Activated naive CD4-positive, alpha-beta T cell treated with anti-CD3 and anti-CD28 coated beads for 36 hours (primary cell): ENCODE measurements at regions of chr1 and their contacts with region 1.

Region 1: DNA sequence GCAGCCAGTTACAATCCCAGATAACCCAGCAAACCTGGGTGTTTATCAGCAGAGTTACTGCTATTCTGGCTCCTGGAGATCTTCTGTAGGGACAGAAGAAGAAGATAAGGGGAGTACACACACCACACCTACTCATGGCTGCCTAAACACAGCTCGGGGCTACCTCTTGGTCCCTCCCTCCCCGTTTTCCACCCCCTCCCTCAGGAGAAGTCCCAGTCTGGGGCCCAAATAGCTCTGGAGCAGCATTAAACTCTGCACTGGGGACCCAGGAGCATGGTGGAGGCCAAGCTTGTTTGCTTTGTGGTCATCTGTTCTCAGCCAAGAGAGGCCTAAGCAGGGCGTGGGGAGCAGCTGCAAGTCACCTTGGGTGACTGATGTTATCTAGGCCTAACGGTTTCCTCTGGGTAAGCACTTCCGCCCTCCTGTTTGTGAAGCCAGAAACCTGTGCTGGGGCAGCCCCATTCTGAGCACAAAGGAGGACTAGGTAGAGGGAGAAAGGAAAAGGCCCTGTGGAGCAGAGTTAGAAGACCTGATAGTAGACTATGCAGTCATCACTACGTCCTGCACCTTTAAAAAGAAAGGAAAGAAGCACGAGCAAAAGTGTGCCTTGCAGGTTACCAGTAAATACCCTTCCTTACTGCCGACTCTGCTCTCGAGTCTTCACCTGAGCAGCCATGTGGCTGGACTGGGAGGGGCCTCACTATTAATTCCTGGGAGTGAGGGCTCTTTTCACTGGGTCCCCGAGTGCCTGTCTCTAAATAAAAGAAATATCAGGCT is 2.0 kb upstream of the RCSD1 start:
- DNase-seq: peak; percentile 92
- H3K4me3 Mint-ChIP-seq: peak overlapping the region; percentile 81
- H3K27ac Mint-ChIP-seq: peak overlapping the region; percentile 94
- H3K4me1 Mint-ChIP-seq: peaks cover 55% of the 10 kb centered on the region
- H3K27me3 Mint-ChIP-seq: no peaks in the 10 kb centered on the region

Region 2: DNA sequence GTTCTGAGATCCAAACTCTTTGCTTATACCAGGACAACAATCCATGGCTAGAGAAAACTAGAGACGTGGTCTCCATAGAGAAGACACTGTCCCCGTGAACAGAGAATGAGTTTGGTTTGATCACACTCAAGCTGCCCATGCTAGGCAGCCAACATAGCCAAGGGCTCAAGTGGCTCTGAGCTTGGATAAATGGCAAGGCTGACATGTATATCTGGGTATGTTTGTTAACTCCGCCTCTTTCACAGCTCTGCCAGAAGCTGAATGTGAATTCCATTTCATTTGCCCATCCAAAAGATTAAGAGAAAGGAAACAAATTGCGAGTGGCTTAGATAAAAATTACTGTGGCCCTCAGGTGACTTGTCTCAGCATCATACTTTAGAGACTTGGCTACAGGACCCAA is 690.7 kb before region 1 on chr1:
- CTCF ChIA-PET with region 1: no interaction called
- intact Hi-C with region 1: no loop called
- DNase-seq: no peak
- H3K4me3 Mint-ChIP-seq: no peak overlapping the region
- H3K27ac Mint-ChIP-seq: no peak overlapping the region
- H3K4me1 Mint-ChIP-seq: no peaks in the 10 kb centered on the region
- H3K27me3 Mint-ChIP-seq: no peaks in the 10 kb centered on the region

Region 3: DNA sequence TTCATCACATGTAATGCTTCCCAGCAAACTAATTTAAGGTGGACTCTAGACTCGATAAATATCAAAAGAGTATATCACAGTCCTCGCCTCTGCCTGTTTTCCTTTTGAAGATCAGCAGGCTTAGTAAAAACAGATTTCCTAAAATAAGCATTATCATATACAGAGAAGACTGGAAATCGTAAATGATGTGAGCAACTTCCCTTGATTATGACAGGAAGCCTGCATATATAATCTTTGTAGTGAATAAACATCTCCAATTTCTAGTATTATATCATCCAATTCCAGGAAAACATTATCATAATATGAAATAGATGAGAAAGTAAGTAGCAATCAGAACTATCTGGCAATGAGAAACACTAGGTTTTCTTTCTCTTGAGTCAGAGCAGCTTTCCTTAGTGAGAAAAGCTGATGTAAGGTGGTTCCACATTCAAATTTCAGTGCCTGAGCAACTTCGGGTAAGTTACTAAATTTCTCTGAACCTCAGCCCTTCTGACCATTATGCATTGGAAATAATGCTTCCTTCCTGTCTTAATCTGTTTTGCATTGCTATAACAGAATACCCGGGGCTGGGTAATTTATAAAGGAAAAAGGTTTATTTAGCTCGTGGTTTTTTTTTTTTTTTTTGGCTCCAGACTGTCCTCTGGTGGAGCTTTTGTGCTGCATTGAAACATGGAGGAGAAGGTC is 420.0 kb before region 1 on chr1:
- CTCF ChIA-PET with region 1: no interaction called
- intact Hi-C with region 1: no loop called
- DNase-seq: no peak
- H3K4me3 Mint-ChIP-seq: no peak overlapping the region
- H3K27ac Mint-ChIP-seq: peak overlapping the region; percentile 91
- H3K4me1 Mint-ChIP-seq: peaks cover 9% of the 10 kb centered on the region
- H3K27me3 Mint-ChIP-seq: no peaks in the 10 kb centered on the region

Region 4: GRCh38 chr1:167599957-167600581 is 28.0 kb before region 1 on chr1:
- CTCF ChIA-PET with region 1: interaction called, 226 read pairs
- intact Hi-C with region 1: loop called (anchors 1 kb)
- DNase-seq: peak; percentile 71
- H3K4me3 Mint-ChIP-seq: peak overlapping the region; percentile 45
- H3K27ac Mint-ChIP-seq: peak overlapping the region; percentile 67
- H3K4me1 Mint-ChIP-seq: peaks cover 39% of the 10 kb centered on the region
- H3K27me3 Mint-ChIP-seq: no peaks in the 10 kb centered on the region

Region 5: GRCh38 chr1:167676205-167676915 is 48.3 kb after region 1 on chr1:
- CTCF ChIA-PET with region 1: interaction called, 6 read pairs
- intact Hi-C with region 1: loop called (anchors 2 kb)
- DNase-seq: peak; percentile 70
- H3K4me3 Mint-ChIP-seq: no peak overlapping the region
- H3K27ac Mint-ChIP-seq: peak overlapping the region; percentile 42
- H3K4me1 Mint-ChIP-seq: peaks cover 35% of the 10 kb centered on the region
- H3K27me3 Mint-ChIP-seq: no peaks in the 10 kb centered on the region

Region 6: GRCh38 chr1:167715157-167715999 is 87.3 kb after region 1 on chr1:
- CTCF ChIA-PET with region 1: interaction called, 3 read pairs
- intact Hi-C with region 1: loop called (anchors 2 kb)
- DNase-seq: peak; percentile 95
- H3K4me3 Mint-ChIP-seq: peak overlapping the region; percentile 79
- H3K27ac Mint-ChIP-seq: peak overlapping the region; percentile 92
- H3K4me1 Mint-ChIP-seq: peaks cover 28% of the 10 kb centered on the region
- H3K27me3 Mint-ChIP-seq: peaks cover 5% of the 10 kb centered on the region

Region 7: GRCh38 chr1:167936068-167936929 is 308.2 kb after region 1 on chr1 and contains the start of gene DCAF6:
- CTCF ChIA-PET with region 1: no interaction called
- intact Hi-C with region 1: loop called (anchors 2 kb)
- DNase-seq: peak; percentile 97
- H3K4me3 Mint-ChIP-seq: peak within 1 kb of the TSS; percentile 85
- H3K27ac Mint-ChIP-seq: peak within 1 kb of the TSS; percentile 100
- H3K4me1 Mint-ChIP-seq: peaks cover 32% of the 10 kb centered on the region
- H3K27me3 Mint-ChIP-seq: no peaks in the 10 kb centered on the region
- total RNA-seq, gene DCAF6: 15.4 to 15.9 TPM